Thyroid gland (tissue), 4 donors: ENCODE measurements at regions of chr16 and their contacts with region 1.

Region 1: GRCh38 chr16:2340564-2341455 is at the start of gene ABCA3:
- DNase-seq: peak; percentile 91 to 93
- H3K4me3 ChIP-seq: peak within 1 kb of the TSS; percentile 59 to 95 (median 65)
- H3K27ac ChIP-seq: peak within 1 kb of the TSS in 2 of 3 donors; percentile 27 to 45
- H3K4me1 ChIP-seq: peaks cover 20 to 31% of the 10 kb centered on the region in 2 donors
- H3K27me3 ChIP-seq: no peaks in the 10 kb centered on the region
- CTCF ChIP-seq: peak in 5 of 6 experiments; percentile 91 to 100 (median 97)
- POLR2A ChIP-seq: peak; percentile 42 to 81
- total RNA-seq, gene ABCA3: 36.5 to 66.7 (median 60.4) TPM

Region 2: DNA sequence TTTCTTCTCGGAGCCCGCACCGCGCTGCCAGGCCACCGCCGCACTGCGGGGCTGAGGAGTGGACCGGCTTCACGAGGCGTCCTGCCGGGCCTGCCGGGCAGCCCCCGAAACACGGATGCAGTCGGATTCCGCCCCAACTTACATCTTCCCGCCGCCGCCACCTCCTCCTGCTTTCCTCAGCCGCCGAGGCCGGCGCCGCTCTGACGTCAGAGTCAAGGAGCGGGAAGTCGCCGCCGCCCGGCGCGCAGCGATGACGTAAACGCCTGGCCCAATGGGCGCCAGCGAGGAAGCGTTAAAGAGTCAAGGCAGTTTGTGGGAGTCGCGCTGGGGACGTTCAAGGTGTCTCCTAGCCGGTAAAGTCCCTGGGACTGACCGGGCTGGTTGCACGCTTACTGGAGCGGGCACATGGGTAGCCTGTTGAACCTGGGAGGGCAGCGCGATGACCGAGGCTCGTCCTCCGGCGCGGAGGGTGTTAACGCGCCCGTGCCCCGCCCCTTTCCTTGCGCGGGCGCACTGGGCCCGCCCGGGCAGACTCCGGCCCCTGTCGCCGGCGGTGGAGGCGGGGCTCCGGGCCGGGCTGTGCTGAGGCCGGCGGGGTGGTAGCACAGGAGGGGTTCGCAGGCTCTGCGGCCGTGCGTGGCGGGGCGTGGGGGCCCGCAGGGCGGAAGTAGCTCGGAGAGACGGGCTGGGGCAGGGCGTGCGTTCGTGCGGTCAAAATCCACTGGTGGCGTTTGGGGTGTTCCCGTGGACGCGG is 72.7 kb before region 1 on chr16 and contains the start of gene RNPS1:
- intact Hi-C with region 1: no loop called
- DNase-seq: peak; percentile 94 to 95
- H3K4me3 ChIP-seq: peak within 1 kb of the TSS; percentile 30 to 85 (median 51)
- H3K27ac ChIP-seq: peak within 1 kb of the TSS; percentile 88 to 97 (median 95)
- H3K4me1 ChIP-seq: peaks cover 11 to 16% of the 10 kb centered on the region in 2 donors
- H3K27me3 ChIP-seq: no peaks in the 10 kb centered on the region
- CTCF ChIP-seq: peak in 1 of 6 experiments; percentile 41
- POLR2A ChIP-seq: peak; percentile 86 to 91
- total RNA-seq, gene RNPS1: 127 to 158 (median 141) TPM

Region 3: DNA sequence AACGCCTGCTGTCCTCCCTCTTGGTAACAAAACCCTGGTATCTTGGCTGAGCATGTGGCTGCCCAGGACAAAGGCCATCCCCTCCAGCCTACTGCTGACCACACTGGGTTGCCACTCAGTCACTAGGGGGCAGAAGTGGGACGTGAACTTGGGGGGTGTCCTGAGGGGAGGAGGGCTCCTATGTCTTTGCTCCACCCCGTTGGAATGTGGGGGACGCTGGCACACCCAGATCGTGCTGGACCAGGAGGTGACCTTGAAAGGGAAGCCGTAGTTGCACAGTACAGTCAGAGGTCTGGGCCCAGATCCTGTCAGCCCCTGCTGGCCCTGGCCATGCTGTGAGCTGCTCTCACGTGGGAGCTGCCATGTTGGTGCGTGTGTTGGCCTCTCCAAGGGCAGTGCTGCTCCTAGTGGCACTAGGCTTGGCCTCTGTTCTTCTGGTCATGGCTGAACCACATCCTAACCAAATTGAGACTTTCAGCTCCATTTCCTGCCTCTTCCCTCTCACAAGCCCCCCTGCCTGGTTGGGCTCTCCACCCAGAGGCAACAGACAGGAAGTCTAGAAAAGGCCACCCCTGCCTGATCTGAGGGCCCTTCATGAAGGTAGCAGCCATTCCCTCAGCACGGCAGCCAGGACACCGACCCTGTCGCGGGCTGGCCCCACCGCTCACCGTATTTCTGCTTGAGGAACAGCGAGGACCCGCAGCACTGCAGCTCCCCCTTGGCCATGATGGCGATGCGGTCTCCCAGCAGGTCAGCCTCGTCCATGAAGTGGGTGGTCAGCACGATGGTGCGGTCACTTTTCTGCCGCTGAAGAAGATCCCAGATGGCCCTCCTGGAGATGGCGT is 43.9 kb before region 1 on chr16:
- intact Hi-C with region 1: loop called (anchors 10 kb)
- DNase-seq: peak; percentile 73 to 80
- H3K4me3 ChIP-seq: no peak overlapping the region
- H3K27ac ChIP-seq: peak overlapping the region in 1 of 3 donors; percentile 17
- H3K4me1 ChIP-seq: peaks cover 5 to 7% of the 10 kb centered on the region in 2 donors
- H3K27me3 ChIP-seq: no peaks in the 10 kb centered on the region
- CTCF ChIP-seq: peak; percentile 22 to 89 (median 62)
- POLR2A ChIP-seq: no peak

Region 4: GRCh38 chr16:2404099-2404498 is 63.3 kb after region 1 on chr16:
- intact Hi-C with region 1: no loop called
- DNase-seq: no peak
- H3K4me3 ChIP-seq: no peak overlapping the region
- H3K27ac ChIP-seq: no peak overlapping the region
- H3K4me1 ChIP-seq: no peaks in the 10 kb centered on the region
- H3K27me3 ChIP-seq: no peaks in the 10 kb centered on the region
- CTCF ChIP-seq: no peak
- POLR2A ChIP-seq: no peak

Region 5: DNA sequence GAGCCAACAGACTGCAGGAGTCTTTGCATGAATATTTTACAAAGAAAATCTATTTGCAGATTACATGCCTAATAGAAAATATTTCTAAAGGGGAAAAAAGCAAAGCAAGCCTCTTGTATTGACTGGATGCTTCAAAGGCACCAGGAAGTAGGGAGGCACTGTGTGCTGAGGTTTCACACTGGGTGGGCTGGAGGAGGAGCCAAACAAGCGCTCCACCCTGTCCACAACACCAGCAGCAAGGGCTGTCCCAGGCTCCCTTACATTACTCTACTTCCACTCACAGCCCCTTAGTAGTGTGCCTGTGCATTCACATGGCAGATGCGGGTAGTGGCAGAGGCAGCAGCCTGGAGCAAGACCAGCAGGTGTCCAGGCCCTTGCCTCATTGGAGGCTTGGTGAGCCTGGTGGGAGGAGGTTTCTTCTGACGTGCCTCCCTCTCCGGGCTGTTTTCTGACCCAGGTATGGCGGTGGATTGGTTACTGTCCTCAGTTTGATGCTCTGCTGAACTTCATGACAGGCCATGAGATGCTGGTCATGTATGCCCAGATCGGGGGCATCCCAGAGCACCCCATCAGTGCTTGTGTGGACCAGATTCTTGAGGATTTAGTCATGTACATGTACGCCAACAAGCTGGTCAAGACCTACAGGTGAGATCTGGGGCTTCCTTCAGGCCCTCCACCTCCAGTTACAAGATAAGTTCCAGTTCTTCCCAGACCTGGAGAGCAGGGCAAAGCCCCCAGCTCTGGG is 81.5 kb after region 1 on chr16:
- intact Hi-C with region 1: loop called (anchors 5 kb)
- DNase-seq: no peak
- H3K4me3 ChIP-seq: no peak overlapping the region
- H3K27ac ChIP-seq: no peak overlapping the region
- H3K4me1 ChIP-seq: peaks cover 0 to 9% of the 10 kb centered on the region in 2 donors
- H3K27me3 ChIP-seq: no peaks in the 10 kb centered on the region
- CTCF ChIP-seq: no peak
- POLR2A ChIP-seq: no peak

Region 6: GRCh38 chr16:2500918-2501750 is 160.3 kb after region 1 on chr16:
- intact Hi-C with region 1: loop called (anchors 5 kb)
- DNase-seq: peak; percentile 86 to 88
- H3K4me3 ChIP-seq: no peak overlapping the region
- H3K27ac ChIP-seq: peak overlapping the region in 2 of 3 donors; percentile 12 to 90
- H3K4me1 ChIP-seq: peaks cover 43 to 61% of the 10 kb centered on the region in 2 donors
- H3K27me3 ChIP-seq: no peaks in the 10 kb centered on the region
- CTCF ChIP-seq: peak; percentile 96 to 99 (median 98)
- POLR2A ChIP-seq: peak in 1 of 2 donors; percentile 5

Region 7: GRCh38 chr16:2614761-2615191 is 274.0 kb after region 1 on chr16:
- intact Hi-C with region 1: no loop called
- DNase-seq: no peak
- H3K4me3 ChIP-seq: no peak overlapping the region
- H3K27ac ChIP-seq: no peak overlapping the region
- H3K4me1 ChIP-seq: no peaks in the 10 kb centered on the region
- H3K27me3 ChIP-seq: no peaks in the 10 kb centered on the region
- CTCF ChIP-seq: no peak
- POLR2A ChIP-seq: no peak